ENCODE measurements at regions of chr13 and their contacts with region 1.

Region 1: DNA sequence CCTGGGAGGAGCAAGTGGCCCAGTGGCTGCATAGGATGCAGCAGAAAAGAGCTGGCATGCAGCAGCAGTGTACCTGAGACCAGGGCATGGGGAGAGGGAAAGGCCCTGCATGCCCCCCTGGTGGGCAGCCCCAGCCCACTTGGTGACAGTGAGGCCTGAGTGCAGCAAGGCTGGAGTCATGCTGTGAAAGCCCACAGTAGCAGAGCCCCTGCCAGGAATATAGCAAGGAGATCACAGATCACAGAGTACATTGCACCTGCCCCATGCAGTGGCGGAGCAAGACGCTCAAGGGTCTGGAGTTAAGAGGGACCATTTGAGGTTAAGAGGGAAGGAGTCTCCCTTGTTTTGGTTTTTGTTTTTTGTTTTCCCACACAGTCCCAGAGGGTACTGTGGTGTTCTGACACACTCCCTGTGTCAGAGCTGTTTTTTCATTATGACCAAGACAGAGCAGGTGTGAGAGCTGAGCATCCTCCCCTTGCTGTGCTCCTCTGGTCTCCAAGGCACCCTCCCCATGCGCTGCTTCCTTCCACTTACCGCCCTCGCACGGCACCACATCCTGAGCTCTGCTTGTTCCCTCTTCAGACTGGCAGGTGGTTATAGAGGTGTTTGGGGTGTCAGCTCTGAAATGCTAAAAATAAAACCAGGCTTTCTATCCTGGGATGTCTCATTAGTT is 85.0 kb upstream of the UBL3 start:
- DNase-seq: peak; percentile 80 to 86 (median 84)
- H3K4me3 ChIP-seq: peak overlapping the region; percentile 72 to 82
- H3K4me3 Mint-ChIP-seq: peak overlapping the region; percentile 86 to 96 (median 94)
- H3K27ac ChIP-seq: peak overlapping the region; percentile 59
- H3K27ac Mint-ChIP-seq: peak overlapping the region; percentile 86 to 97 (median 92)
- H3K4me1 ChIP-seq: peaks cover 64% of the 10 kb centered on the region
- H3K4me1 Mint-ChIP-seq: peaks cover 46 to 77% (median 64%) of the 10 kb centered on the region in 4 donors
- H3K27me3 ChIP-seq: no peaks in the 10 kb centered on the region
- H3K27me3 Mint-ChIP-seq: peaks cover 0 to 2% of the 10 kb centered on the region in 2 donors

Region 2: GRCh38 chr13:29679396-29680053 is 255.9 kb before region 1 on chr13:
- CTCF ChIA-PET with region 1: no interaction called
- POLR2A ChIA-PET with region 1: no interaction called
- intact Hi-C with region 1: no loop called
- DNase-seq: no peak
- H3K4me3 ChIP-seq: no peak overlapping the region
- H3K4me3 Mint-ChIP-seq: no peak overlapping the region
- H3K27ac ChIP-seq: no peak overlapping the region
- H3K27ac Mint-ChIP-seq: no peak overlapping the region
- H3K4me1 ChIP-seq: no peaks in the 10 kb centered on the region
- H3K4me1 Mint-ChIP-seq: no peaks in the 10 kb centered on the region
- H3K27me3 ChIP-seq: no peaks in the 10 kb centered on the region
- H3K27me3 Mint-ChIP-seq: peaks cover 14 to 17% of the 10 kb centered on the region in 2 donors

Region 3: DNA sequence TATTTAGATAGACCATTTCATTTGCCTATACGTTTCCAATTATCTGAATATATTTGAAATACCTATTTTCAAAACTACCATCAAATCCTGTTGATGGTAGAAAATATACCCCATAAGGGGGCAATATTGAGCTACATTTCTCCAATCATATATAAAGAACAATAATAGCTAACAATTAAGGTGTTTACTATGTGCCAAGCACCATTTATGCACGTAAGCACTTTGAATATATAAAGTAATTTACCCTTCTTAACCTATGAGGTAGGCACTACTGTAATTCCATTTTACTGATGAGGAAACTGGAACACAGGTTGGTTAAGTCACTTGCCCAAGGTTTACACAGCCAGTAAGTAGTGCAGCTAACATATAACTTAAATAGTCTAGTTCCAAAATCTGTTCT is 164.2 kb before region 1 on chr13:
- CTCF ChIA-PET with region 1: interaction called, 56 read pairs
- POLR2A ChIA-PET with region 1: interaction called, 11 read pairs
- intact Hi-C with region 1: loop called (anchors 1 kb)
- DNase-seq: peak in 4 of 5 donors; percentile 49 to 54 (median 52)
- H3K4me3 ChIP-seq: no peak overlapping the region
- H3K4me3 Mint-ChIP-seq: no peak overlapping the region
- H3K27ac ChIP-seq: no peak overlapping the region
- H3K27ac Mint-ChIP-seq: no peak overlapping the region
- H3K4me1 ChIP-seq: no peaks in the 10 kb centered on the region
- H3K4me1 Mint-ChIP-seq: peaks cover 0 to 4% (median 3%) of the 10 kb centered on the region in 4 donors
- H3K27me3 ChIP-seq: no peaks in the 10 kb centered on the region
- H3K27me3 Mint-ChIP-seq: no peaks in the 10 kb centered on the region

Region 4: GRCh38 chr13:29923554-29924481 is 11.6 kb before region 1 on chr13:
- CTCF ChIA-PET with region 1: interaction called, 231 read pairs
- POLR2A ChIA-PET with region 1: interaction called, 36 read pairs
- intact Hi-C with region 1: no loop called
- DNase-seq: peak; percentile 16 to 64 (median 40)
- H3K4me3 ChIP-seq: no peak overlapping the region
- H3K4me3 Mint-ChIP-seq: peak overlapping the region in 2 of 8 donors; percentile 14 to 34
- H3K27ac ChIP-seq: no peak overlapping the region
- H3K27ac Mint-ChIP-seq: peak overlapping the region in 1 of 7 donors; percentile 53
- H3K4me1 ChIP-seq: peaks cover 17% of the 10 kb centered on the region
- H3K4me1 Mint-ChIP-seq: peaks cover 19 to 38% (median 28%) of the 10 kb centered on the region in 4 donors
- H3K27me3 ChIP-seq: no peaks in the 10 kb centered on the region
- H3K27me3 Mint-ChIP-seq: no peaks in the 10 kb centered on the region

Region 5: DNA sequence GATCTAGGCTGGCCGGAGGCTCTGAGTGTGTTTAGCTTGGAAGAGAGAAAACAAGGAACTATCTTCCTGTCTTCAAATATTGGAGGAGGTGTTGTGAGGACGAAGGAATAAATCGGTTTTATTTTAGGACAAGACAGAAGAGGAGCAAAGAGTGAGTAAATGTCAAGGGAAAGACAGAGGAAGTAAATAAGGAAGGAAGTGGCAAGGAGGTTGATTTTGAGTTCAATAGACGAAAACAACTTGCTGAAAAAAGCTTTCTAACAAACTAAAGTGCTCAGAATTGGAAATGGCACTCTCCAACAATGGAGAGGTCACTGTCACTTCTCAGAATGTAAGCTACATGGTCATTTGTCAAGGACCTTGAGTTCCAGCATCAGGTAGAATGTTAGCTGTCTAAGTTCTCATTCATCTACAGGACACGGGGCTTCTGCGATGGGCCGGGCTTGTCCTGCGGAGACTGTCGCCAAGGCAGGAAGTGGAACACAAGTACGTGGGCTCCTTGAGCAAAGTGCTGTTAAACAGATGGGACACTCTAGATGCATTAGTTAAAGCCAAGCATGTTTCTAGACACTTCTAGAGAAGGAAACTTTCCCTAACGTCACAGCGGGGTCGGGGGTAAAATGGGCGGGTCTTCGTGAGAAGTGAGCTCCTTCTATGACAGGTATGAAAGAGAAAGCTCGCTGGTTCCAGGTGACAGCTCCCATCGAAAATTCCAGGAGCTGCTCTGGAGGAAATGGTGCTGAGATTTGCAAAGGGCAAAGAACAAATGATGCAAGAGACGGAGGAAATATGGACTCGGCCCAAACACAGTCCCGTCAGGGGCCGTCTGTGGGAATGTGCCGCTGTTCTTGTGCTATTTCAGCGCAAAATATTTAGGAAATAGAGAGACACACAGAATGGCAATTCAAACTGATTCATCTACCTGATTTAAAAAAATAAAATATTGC is 18.9 kb after region 1 on chr13:
- CTCF ChIA-PET with region 1: interaction called, 68 read pairs
- POLR2A ChIA-PET with region 1: interaction called, 247 read pairs
- intact Hi-C with region 1: loop called (anchors 1 kb)
- DNase-seq: peak; percentile 46 to 81 (median 68)
- H3K4me3 ChIP-seq: peak overlapping the region; percentile 35 to 47
- H3K4me3 Mint-ChIP-seq: peak overlapping the region; percentile 80 to 98 (median 88)
- H3K27ac ChIP-seq: peak overlapping the region; percentile 49
- H3K27ac Mint-ChIP-seq: peak overlapping the region; percentile 77 to 96 (median 90)
- H3K4me1 ChIP-seq: peaks cover 53% of the 10 kb centered on the region
- H3K4me1 Mint-ChIP-seq: peaks cover 29 to 58% (median 44%) of the 10 kb centered on the region in 4 donors
- H3K27me3 ChIP-seq: no peaks in the 10 kb centered on the region
- H3K27me3 Mint-ChIP-seq: no peaks in the 10 kb centered on the region

Region 6: DNA sequence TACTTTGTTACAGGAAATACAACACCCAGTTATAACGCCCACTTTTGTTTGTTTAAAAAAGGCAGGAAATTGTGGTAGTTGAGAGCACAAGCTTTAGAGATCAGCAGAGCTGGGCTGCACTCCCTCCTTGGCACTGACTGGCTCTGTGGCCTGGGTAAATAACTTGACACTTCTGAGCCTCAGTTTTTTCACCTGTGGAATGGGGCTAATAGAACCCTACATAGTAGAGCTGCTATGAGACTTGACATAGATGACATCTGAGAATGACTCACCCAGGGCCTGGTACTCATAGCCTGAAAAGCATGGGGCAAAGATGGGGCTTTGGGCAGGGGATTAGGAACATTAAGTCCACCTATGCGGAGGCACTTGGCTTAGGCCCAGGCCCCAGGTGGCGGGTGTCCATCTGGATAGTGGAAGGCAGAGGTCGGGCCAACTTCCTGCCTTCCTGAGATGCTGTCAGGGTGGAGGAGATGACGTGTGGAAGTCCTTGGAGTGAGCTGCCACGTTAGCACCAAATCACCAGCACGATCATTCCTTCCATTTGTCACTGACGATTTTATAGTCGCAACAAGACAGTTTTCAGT is 212.8 kb after region 1 on chr13:
- CTCF ChIA-PET with region 1: interaction called, 11 read pairs
- POLR2A ChIA-PET with region 1: interaction called, 21 read pairs
- intact Hi-C with region 1: no loop called
- DNase-seq: peak; percentile 73 to 81 (median 80)
- H3K4me3 ChIP-seq: peak overlapping the region in 1 of 2 donors; percentile 31
- H3K4me3 Mint-ChIP-seq: peak overlapping the region in 7 of 8 donors; percentile 70 to 88 (median 75)
- H3K27ac ChIP-seq: peak overlapping the region; percentile 60
- H3K27ac Mint-ChIP-seq: peak overlapping the region; percentile 90 to 97 (median 93)
- H3K4me1 ChIP-seq: peaks cover 99% of the 10 kb centered on the region
- H3K4me1 Mint-ChIP-seq: peaks cover 79 to 100% (median 93%) of the 10 kb centered on the region in 4 donors
- H3K27me3 ChIP-seq: no peaks in the 10 kb centered on the region
- H3K27me3 Mint-ChIP-seq: no peaks in the 10 kb centered on the region